Mammary epithelial cell (primary cell): ENCODE measurements at regions of chr12 and their contacts with region 1.

Region 1: DNA sequence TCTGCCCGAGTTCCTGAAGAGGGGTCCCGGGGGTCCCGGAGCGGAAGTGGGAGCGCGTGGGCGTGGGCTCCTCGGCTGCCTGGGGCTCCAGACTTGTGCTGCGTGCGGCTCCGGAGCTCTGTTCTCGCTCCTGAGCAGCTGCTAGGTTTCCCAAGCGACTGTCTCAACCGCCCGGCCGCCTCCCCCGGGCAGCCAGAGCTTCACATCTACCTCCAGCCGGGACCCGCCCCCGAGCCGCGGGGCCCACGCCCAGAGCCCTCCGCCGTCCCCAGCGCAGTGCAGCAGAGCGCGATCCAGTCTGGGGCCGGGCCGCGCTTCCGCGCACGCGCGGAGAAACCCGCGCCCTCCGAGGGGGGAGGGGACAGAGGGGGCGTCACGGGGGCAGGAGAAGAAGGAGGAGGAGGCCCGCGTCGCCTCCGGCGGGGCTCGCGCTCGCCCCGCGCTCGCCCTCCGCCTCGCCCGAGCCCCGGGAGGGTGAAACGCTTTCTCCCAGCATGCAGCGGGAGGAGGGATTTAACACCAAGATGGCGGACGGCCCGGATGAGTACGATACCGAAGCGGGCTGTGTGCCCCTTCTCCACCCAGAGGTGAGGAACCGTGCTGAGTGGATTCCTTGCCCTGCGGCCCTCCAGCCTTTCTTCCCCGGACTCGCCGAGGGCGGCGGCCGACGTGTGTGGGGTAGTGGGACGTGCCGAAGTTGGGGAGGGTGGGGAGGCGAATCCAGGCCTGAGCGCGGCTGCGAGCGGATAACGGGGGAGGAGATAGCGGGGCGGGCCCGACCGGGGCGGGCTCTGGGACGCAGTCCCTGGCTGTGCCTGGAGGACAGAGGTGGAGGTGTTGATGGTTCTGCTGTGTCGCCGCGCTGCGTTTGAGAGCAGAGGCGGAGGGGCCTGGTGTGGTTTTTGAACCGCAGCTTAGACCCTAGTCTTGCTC is at the start of gene ZDHHC17:
- DNase-seq: peak; percentile 94
- H3K4me3 ChIP-seq: peak within 1 kb of the TSS; percentile 78 to 99 (median 98)
- H3K27ac ChIP-seq: peak within 1 kb of the TSS; percentile 87
- H3K4me1 ChIP-seq: no peaks in the 10 kb centered on the region
- H3K27me3 ChIP-seq: no peaks in the 10 kb centered on the region
- CTCF ChIP-seq: no peak
- total RNA-seq, gene ZDHHC17: 22.8 to 37.5 TPM

Region 2: DNA sequence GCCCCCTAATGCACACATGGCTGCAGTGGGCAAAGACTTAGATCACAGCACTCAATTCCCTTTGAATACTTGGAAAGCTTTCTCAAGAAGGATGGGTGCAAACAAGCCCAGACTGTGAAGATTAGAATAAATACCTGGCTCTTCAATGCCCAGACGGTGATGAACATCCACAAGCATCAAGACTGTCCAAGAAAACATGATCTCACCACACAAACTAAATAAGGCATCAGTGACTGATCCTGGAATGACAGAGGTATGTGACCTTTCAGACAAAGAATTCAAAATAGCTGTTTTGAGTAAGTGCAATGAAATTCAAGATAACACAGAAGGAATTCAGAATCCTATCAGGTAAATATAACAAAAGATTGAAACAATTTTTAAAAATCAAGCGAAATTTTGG is 43.9 kb before region 1 on chr12:
- CTCF ChIA-PET with region 1: no interaction called
- dilution Hi-C with region 1: no loop called
- in situ Hi-C with region 1: no loop called
- intact Hi-C with region 1: loop called (anchors 5 kb)
- DNase-seq: peak; percentile 65
- H3K4me3 ChIP-seq: no peak overlapping the region
- H3K27ac ChIP-seq: no peak overlapping the region
- H3K4me1 ChIP-seq: peaks cover 5% of the 10 kb centered on the region
- H3K27me3 ChIP-seq: no peaks in the 10 kb centered on the region
- CTCF ChIP-seq: no peak

Region 3: GRCh38 chr12:76782526-76782925 is 18.5 kb after region 1 on chr12:
- CTCF ChIA-PET with region 1: no interaction called
- dilution Hi-C with region 1: no loop called
- in situ Hi-C with region 1: no loop called
- intact Hi-C with region 1: loop called (anchors 2 kb)
- DNase-seq: no peak
- H3K4me3 ChIP-seq: no peak overlapping the region
- H3K27ac ChIP-seq: no peak overlapping the region
- H3K4me1 ChIP-seq: peaks cover 8% of the 10 kb centered on the region
- H3K27me3 ChIP-seq: no peaks in the 10 kb centered on the region
- CTCF ChIP-seq: no peak